ENCODE measurements at regions of chr15 and their contacts with region 1.

Region 1: DNA sequence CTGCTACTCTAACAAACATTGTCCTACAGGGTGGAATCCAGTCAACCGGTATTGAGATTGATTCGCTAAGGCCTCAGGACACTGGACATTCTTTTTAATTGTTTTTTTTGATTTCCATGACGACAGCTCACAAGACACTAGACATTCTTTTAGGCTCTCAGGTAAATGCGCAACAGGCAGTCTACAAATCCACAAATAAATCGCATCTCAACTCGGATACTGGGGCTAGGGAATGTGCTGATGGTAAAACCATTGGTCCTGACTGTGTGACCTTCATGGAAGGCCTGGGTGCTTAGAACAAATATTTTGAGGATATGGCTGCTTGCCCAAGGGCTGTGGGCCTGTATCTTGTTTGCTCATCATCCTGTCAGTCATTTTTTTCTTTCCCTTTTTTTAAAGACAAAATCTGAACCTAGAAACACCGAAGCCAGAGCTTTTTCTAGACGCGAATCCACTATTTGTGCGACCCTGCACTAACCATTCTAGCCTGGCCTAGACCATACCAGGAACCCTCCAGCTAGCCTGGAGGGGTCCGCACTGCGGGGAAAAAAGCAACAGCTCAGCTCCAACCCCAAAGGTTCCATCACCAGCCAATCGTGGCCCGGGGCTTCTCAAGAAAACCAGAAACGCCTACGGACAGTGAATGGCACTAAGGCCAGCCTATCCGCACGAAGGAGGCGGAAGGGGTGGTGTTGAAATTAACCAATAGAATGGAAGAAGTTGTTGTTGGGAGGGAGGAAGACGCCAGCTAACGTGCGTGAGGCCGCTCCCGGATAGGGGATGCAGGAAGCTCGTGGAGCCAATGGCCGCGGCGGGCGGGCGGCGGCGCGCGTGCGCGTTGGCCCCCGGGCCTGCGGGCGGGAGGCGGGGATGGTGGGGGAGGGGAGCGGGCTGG is 18.1 kb upstream of the CHD2 start:
- DNase-seq: peak; percentile 95 to 100 (median 99)
- H3K4me3 ChIP-seq: peak overlapping the region; percentile 33 to 98 (median 89)
- H3K27ac ChIP-seq: peak overlapping the region; percentile 91 to 100 (median 100)
- H3K27me3 ChIP-seq: no peaks in the 10 kb centered on the region
- CTCF ChIP-seq: no peak

Region 2: GRCh38 chr15:92683232-92683834 is 198.7 kb before region 1 on chr15:
- intact Hi-C with region 1: no loop called
- DNase-seq: peak in 7 of 10 donors; percentile 27 to 64 (median 54)
- H3K4me3 ChIP-seq: no peak overlapping the region
- H3K27ac ChIP-seq: no peak overlapping the region
- H3K27me3 ChIP-seq: no peaks in the 10 kb centered on the region
- CTCF ChIP-seq: peak in 55 of 56 donors; percentile 24 to 90 (median 67)

Region 3: GRCh38 chr15:92820236-92821021 is 61.6 kb before region 1 on chr15:
- intact Hi-C with region 1: loop called in 1 of 2 experiments (anchors 2 kb)
- DNase-seq: peak; percentile 86 to 95 (median 92)
- H3K4me3 ChIP-seq: peak overlapping the region; percentile 17 to 79 (median 58)
- H3K27ac ChIP-seq: peak overlapping the region; percentile 89 to 100 (median 99)
- H3K27me3 ChIP-seq: no peaks in the 10 kb centered on the region
- CTCF ChIP-seq: peak in 16 of 56 donors; percentile 2 to 30 (median 13)

Region 4: GRCh38 chr15:92903941-92904831 is 22.1 kb after region 1 on chr15:
- intact Hi-C with region 1: loop called (anchors 1 to 2 kb)
- DNase-seq: peak; percentile 97 to 100 (median 99)
- H3K4me3 ChIP-seq: peak overlapping the region; percentile 45 to 97 (median 73)
- H3K27ac ChIP-seq: peak overlapping the region; percentile 77 to 100 (median 99)
- H3K27me3 ChIP-seq: no peaks in the 10 kb centered on the region
- CTCF ChIP-seq: peak in 26 of 56 donors; percentile 7 to 41 (median 19)

Region 5: GRCh38 chr15:92989470-92989869 is 107.4 kb after region 1 on chr15:
- intact Hi-C with region 1: no loop called
- DNase-seq: no peak
- H3K4me3 ChIP-seq: no peak overlapping the region
- H3K27ac ChIP-seq: peak overlapping the region in 25 of 59 donors; percentile 0 to 68 (median 31)
- H3K27me3 ChIP-seq: no peaks in the 10 kb centered on the region
- CTCF ChIP-seq: no peak